ENCODE measurements at regions of chr16 and their contacts with region 1.

Region 1: GRCh38 chr16:3134564-3135417 is at the start of gene ZNF213:
- DNase-seq: peak; percentile 96 to 98
- H3K4me3 ChIP-seq: peak within 1 kb of the TSS; percentile 68 to 81
- H3K27ac ChIP-seq: peak within 1 kb of the TSS; percentile 85 to 95
- H3K4me1 ChIP-seq: peaks cover 5 to 21% of the 10 kb centered on the region in 2 donors
- H3K27me3 ChIP-seq: no peaks in the 10 kb centered on the region
- CTCF ChIP-seq: no peak
- total RNA-seq, gene ZNF213: 25.3 TPM

Region 2: GRCh38 chr16:3106205-3106928 is 28.4 kb before region 1 on chr16:
- intact Hi-C with region 1: loop called (anchors 1 kb)
- DNase-seq: peak; percentile 63 to 96
- H3K4me3 ChIP-seq: peak overlapping the region; percentile 58 to 73
- H3K27ac ChIP-seq: peak overlapping the region; percentile 46 to 48
- H3K4me1 ChIP-seq: peaks cover 4 to 5% of the 10 kb centered on the region in 2 donors
- H3K27me3 ChIP-seq: no peaks in the 10 kb centered on the region
- CTCF ChIP-seq: no peak

Region 3: GRCh38 chr16:3123986-3124886 is 10.6 kb before region 1 on chr16:
- intact Hi-C with region 1: loop called (anchors 1 kb)
- DNase-seq: peak; percentile 88 to 98
- H3K4me3 ChIP-seq: peak overlapping the region; percentile 66 to 92
- H3K27ac ChIP-seq: peak overlapping the region; percentile 75 to 85
- H3K4me1 ChIP-seq: peaks cover 13 to 18% of the 10 kb centered on the region in 2 donors
- H3K27me3 ChIP-seq: no peaks in the 10 kb centered on the region
- CTCF ChIP-seq: peak in 2 of 3 experiments; percentile 6 to 28

Region 4: GRCh38 chr16:3150346-3151218 is 15.8 kb after region 1 on chr16:
- intact Hi-C with region 1: loop called (anchors 1 kb)
- DNase-seq: peak; percentile 89 to 98
- H3K4me3 ChIP-seq: peak overlapping the region; percentile 76
- H3K27ac ChIP-seq: peak overlapping the region; percentile 82 to 86
- H3K4me1 ChIP-seq: peaks cover 0 to 15% of the 10 kb centered on the region in 2 donors
- H3K27me3 ChIP-seq: no peaks in the 10 kb centered on the region
- CTCF ChIP-seq: no peak

Region 5: DNA sequence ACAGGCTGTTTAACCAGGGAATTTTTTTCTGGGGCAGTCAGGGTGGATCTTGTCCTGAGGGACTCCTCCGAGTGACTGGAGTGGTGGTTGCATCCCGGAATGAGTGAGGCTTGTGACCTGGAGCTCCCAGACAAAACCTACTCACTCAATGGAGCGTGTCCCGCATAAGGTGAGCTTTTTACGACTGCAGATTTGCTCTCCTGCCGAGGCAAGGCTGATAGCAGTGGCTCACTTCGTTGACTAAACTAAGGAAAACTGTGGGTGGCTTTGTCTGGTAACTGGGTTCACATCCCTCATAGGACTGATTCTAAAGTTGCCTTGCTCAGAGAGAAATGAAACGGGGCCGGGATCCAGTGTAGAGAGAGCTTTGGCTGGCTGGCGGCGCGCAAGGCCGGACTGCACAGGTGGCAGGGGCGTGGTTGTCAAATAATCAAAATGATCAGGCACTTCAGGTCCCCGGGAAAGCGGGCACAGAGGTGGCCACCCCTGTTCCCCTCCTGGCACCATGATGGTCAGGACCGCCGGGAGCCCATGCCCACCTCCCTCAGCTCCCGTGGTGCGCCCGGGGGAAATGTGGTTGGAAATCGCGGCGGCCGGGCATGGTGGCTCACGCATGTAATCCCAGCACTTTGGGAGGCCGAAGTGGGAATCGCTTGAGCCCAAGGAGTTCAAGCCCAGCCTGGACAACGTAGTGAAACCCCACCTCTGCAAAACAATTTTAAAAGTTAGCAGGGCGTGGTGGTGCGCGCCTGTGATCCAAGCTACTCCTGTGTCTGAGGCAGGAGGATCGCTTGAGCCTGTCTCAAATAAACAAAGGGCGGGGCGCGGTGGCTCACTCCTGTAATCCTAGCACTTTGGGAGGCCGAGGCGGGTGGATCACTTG is 26.6 kb after region 1 on chr16:
- intact Hi-C with region 1: no loop called
- DNase-seq: no peak
- H3K4me3 ChIP-seq: no peak overlapping the region
- H3K27ac ChIP-seq: no peak overlapping the region
- H3K4me1 ChIP-seq: peaks cover 4 to 13% of the 10 kb centered on the region in 2 donors
- H3K27me3 ChIP-seq: no peaks in the 10 kb centered on the region
- CTCF ChIP-seq: no peak